Thyroid gland (tissue), 4 donors: ENCODE measurements at regions of chr10 and their contacts with region 1.

Region 1: DNA sequence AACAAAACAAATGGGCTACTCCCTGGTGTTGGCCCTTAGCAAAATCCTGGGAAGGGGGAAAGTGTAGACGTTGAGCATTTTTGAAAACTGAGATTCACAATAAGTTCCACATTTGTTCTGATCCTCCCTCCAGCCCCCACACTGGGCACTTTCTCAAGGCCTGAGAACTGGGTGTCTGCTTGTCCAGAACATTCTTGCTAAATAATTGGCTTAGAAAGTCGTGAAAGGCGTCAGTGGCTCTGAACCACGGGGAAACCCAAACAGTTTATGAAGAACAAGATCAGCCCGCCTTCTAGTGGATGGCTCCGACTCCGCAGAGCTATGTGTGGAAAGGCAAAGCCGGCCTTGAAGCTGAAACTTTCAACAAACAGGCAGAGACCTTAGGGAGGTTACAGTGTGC is 370.1 kb downstream of the PRPF18 start:
- DNase-seq: peak; percentile 50 to 72
- H3K4me3 ChIP-seq: no peak overlapping the region
- H3K27ac ChIP-seq: peak overlapping the region in 2 of 3 donors; percentile 15 to 39
- H3K4me1 ChIP-seq: no peaks in the 10 kb centered on the region
- H3K27me3 ChIP-seq: no peaks in the 10 kb centered on the region
- CTCF ChIP-seq: peak in 4 of 6 experiments; percentile 44 to 62 (median 54)
- POLR2A ChIP-seq: no peak

Region 2: GRCh38 chr10:13792006-13792405 is 164.8 kb before region 1 on chr10:
- intact Hi-C with region 1: loop called (anchors 10 kb)
- DNase-seq: peak; percentile 82 to 96
- H3K4me3 ChIP-seq: no peak overlapping the region
- H3K27ac ChIP-seq: no peak overlapping the region
- H3K4me1 ChIP-seq: peaks cover 14 to 31% of the 10 kb centered on the region in 2 donors
- H3K27me3 ChIP-seq: no peaks in the 10 kb centered on the region
- CTCF ChIP-seq: no peak
- POLR2A ChIP-seq: no peak

Region 3: GRCh38 chr10:14126701-14127440 is 170.0 kb after region 1 on chr10:
- intact Hi-C with region 1: no loop called
- DNase-seq: peak; percentile 12 to 14
- H3K4me3 ChIP-seq: no peak overlapping the region
- H3K27ac ChIP-seq: no peak overlapping the region
- H3K4me1 ChIP-seq: no peaks in the 10 kb centered on the region
- H3K27me3 ChIP-seq: no peaks in the 10 kb centered on the region
- CTCF ChIP-seq: no peak
- POLR2A ChIP-seq: no peak